Gastrocnemius medialis (tissue), 4 donors: ENCODE measurements at regions of chr5 and their contacts with region 1.

Region 1: DNA sequence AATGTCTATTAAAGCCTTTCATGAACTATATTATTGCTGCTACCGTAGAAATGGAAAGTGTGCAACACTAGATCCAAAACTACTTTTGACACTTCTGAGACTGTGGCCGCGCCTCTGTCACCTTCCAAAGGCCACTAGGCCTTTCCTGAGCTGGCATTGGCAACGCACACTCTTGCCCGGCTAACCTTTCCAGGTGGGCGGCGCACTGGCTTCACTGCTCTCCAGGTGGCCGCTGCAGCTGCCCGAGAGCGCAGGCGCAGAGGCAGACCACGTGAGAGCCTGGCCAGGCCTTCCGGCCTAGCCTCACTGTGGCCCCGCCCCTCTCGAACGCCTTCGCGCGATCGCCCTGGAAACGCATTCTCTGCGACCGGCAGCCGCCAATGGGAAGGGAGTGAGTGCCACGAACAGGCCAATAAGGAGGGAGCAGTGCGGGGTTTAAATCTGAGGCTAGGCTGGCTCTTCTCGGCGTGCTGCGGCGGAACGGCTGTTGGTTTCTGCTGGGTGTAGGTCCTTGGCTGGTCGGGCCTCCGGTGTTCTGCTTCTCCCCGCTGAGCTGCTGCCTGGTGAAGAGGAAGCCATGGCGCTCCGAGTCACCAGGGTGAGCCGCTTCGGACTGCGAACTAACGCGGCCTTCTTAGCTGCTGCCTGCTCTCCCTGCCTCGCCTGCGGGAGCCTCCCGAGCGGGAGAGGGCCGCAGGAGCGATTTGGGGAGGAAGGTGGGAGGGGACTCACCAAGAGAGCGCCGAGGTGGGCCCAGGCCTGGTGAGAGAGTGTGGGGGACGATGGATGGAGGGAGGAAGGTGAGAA is at the start of gene CCNB1:
- DNase-seq: peak; percentile 92 to 96
- ATAC-seq: peak; percentile 100
- H3K4me3 ChIP-seq: peak within 1 kb of the TSS; percentile 65 to 85 (median 74)
- H3K27ac ChIP-seq: peak within 1 kb of the TSS; percentile 31 to 53 (median 38)
- H3K4me1 ChIP-seq: peaks cover 7 to 8% of the 10 kb centered on the region in 2 donors
- H3K27me3 ChIP-seq: no peaks in the 10 kb centered on the region
- CTCF ChIP-seq: no peak
- POLR2A ChIP-seq: no peak
- total RNA-seq, gene CCNB1: 0.84 to 11.1 (median 2.7) TPM

Region 2: DNA sequence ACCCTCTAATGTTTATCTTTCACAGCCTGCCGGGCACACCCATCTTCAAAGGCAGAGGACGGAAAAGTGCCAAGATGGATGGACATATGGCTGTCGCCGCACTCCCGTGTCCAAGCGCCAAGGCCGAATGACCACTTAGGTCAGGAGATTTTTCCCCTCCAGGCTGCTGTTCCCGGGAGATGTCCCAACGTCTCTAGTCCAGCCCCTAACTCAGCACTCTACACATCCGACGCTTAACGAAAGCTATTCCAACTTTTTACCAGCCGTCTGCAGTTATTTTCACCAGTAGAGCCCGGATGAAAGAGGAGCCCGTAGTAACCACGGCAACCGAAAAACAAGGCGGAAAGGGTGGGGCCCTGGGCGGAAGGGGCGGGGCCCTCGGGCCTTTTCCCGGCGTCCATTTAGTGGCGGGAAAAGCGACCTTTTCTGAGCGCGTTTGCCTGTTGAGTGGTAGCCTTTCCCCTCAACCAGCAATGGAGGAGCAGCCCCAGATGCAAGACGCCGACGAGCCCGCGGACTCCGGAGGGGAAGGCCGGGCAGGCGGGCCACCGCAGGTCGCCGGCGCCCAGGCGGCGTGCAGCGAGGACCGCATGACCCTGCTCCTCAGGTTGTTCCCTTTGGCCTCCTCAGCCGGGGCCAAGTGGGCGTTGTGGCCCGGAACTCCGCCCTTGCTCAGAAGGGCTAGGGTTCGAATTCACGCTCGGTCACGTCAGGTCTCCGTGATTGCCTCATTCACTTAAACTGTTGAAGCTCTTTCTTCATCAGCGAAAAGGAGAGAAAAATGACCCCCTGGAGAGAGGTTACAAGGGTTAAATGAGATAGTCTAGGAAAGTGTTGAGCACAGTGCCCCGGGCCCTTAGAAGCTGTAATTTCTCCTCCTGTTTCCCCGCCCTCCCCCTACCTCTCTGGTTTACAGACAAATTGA is 22.5 kb after region 1 on chr5 and contains the start of gene CENPH:
- in situ Hi-C with region 1: no loop called
- intact Hi-C with region 1: loop called (anchors 1 kb)
- DNase-seq: peak; percentile 59 to 77
- ATAC-seq: peak; percentile 98
- H3K4me3 ChIP-seq: peak within 1 kb of the TSS; percentile 69 to 87 (median 78)
- H3K27ac ChIP-seq: peak within 1 kb of the TSS; percentile 65 to 74 (median 68)
- H3K4me1 ChIP-seq: peaks cover 11 to 14% of the 10 kb centered on the region in 2 donors
- H3K27me3 ChIP-seq: no peaks in the 10 kb centered on the region
- CTCF ChIP-seq: no peak
- POLR2A ChIP-seq: no peak
- total RNA-seq, gene CENPH: 0.87 to 4.9 (median 1.8) TPM

Region 3: DNA sequence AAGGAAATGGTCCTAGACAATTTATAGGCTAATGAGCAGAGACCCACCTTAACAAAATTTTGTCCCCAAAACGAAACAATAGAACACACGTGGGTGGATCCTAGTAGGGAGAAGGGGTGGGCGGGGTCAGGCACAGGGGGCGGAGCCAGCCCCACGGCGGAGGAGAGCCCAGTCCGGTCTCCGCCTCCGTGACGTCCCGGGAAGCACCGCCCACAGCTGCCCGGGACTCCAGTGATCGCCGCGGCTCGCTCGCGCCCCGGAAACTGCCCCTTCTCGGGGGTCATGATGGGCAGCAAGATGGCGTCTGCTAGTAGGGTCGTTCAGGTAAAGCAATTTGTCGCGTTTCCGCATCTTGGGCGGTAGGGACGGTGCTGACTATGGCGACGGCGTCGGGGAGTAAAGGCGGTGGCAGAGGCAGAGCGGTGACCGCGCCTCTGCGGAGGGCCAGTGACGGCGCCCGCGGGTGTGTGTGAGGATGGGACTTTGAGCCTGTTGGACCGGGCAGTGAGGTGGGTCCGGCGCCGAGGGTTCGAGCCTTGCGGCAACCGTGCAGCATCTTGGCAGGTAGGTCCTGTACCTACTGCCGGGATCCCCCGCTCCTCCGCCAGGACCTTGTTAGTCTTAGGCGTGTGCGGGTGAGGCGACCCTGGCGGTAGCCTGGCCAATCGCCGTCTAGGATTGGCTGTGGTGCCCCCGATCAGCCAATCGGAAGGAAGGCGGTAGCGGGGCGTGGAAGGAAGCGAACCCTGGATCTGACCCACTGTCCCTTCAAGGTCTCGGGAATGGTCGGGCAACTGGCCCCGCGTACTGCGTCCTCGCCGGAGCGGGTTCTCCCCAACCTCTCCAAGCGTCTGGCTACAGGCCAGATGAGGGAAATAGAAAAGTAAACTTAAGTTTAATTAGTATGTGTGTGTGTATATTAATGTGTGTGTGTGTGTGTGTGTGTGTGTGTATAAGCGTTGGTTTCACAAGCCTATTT is 50.9 kb after region 1 on chr5:
- in situ Hi-C with region 1: no loop called
- intact Hi-C with region 1: loop called (anchors 1 kb)
- DNase-seq: peak; percentile 96 to 97
- ATAC-seq: peak; percentile 95 to 97
- H3K4me3 ChIP-seq: peak overlapping the region; percentile 95 to 100 (median 99)
- H3K27ac ChIP-seq: peak overlapping the region; percentile 93 to 100 (median 98)
- H3K4me1 ChIP-seq: peaks cover 10% of the 10 kb centered on the region in 2 donors
- H3K27me3 ChIP-seq: no peaks in the 10 kb centered on the region
- CTCF ChIP-seq: peak in 4 of 5 experiments; percentile 42 to 62 (median 51)
- POLR2A ChIP-seq: peak; percentile 92 to 95